ENCODE measurements at regions of chr6 and their contacts with region 1.

Region 1: DNA sequence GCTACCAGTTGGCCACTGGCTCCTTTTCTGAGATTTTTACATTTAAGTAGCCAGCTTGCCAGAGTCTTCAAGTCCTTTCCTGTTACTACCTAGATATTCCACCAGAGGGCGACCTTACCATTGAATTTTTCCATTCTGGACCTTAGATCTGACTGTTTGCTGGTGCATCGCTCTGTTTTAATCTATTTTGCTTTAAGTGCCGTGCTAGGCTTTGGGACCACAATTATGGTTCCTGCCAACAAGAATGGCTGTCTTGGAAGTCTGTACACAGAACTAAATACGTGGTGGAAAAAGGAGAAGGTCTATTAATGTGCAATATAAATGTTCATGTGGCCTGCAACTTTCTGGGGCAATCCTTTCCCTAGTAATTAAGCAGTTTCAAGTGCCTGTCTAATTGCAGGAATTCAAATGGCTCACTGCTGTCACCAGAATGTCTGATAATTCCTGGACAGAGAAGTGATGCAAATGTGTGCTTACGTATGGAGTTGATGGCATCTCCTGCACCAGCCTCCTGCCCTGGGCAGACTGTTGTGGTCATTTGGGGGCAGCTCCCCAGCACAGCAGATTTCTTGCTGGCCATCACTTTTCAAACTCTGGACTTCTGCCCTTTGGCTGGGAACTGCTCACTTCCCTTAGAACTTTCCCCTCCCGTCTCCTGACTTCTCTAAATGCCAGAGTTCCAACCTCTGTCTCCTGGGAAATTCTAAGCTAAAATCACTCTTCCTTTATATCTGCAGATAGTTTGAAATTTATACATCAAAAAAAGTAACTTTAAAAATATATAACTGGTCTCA is 5.6 kb upstream of the HLA-DOA start:
- DNase-seq: peak; percentile 51 to 74
- H3K4me3 ChIP-seq: no peak overlapping the region
- H3K4me3 Mint-ChIP-seq: no peak overlapping the region
- H3K27ac Mint-ChIP-seq: no peak overlapping the region
- H3K4me1 ChIP-seq: 0 out of 2 replicates have a peak, but pooled peaks cover 3% of the 10 kb centered on the region
- H3K4me1 Mint-ChIP-seq: no peaks in the 10 kb centered on the region
- H3K27me3 ChIP-seq: no peaks in the 10 kb centered on the region
- H3K27me3 Mint-ChIP-seq: peaks cover 21% of the 10 kb centered on the region
- CTCF ChIP-seq: peak; percentile 57 to 75

Region 2: DNA sequence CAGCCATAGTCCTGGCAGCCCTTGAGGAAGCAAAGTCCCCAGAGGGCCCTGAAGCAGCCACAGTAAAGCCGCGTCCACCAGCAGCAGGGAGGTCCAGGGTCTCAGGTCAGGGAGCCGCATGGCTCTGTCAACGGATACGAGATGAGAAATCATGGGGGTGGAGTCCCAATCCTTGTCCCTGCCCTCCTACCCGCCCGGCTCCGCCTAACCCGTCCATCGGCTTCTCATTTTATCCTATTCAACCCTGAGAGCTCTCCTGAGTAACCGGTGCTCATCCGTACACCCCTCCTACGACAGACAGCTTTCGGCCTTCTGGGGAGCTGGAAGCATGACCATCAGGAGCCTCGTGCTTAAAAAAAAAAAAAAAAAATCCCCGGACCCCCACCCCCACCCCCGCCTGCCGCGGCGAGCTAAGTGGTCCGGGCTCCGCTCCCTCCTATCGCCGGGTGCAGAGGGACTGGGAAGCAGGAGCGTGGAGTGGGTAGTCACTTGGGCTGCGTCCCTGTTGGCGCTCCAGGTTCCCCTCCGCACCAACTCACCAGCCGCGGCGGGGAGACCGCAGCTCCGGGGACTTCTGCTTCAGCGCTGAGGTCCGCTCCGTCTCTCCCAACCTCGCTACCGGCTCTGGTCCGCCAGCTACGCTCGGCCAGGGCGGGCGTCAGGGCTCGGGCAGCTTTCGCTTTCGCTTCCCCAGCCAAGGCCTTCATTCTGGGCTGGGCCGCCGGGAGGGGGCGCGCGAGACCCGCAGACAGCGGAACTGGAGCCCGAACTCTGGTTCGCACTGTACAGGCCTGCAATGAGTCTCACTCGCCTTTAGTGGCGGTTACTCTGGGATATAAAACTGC is 176.7 kb before region 1 on chr6 and contains the start of gene TAP2:
- CTCF ChIA-PET with region 1: no interaction called
- POLR2A ChIA-PET with region 1: no interaction called
- intact Hi-C with region 1: no loop called
- DNase-seq: peak; percentile 89 to 97
- H3K4me3 ChIP-seq: peak within 1 kb of the TSS; percentile 69
- H3K4me3 Mint-ChIP-seq: peak within 1 kb of the TSS; percentile 72
- H3K27ac Mint-ChIP-seq: no peak within 1 kb of the TSS
- H3K4me1 ChIP-seq: peaks cover 5% of the 10 kb centered on the region
- H3K4me1 Mint-ChIP-seq: peaks cover 8% of the 10 kb centered on the region
- H3K27me3 ChIP-seq: no peaks in the 10 kb centered on the region; the same call in 1 of the 2 replicates
- H3K27me3 Mint-ChIP-seq: no peaks in the 10 kb centered on the region
- CTCF ChIP-seq: peak; percentile 85 to 86
- total RNA-seq, gene TAP2: 10.3 and 11.9 TPM in 2 replicates

Region 3: DNA sequence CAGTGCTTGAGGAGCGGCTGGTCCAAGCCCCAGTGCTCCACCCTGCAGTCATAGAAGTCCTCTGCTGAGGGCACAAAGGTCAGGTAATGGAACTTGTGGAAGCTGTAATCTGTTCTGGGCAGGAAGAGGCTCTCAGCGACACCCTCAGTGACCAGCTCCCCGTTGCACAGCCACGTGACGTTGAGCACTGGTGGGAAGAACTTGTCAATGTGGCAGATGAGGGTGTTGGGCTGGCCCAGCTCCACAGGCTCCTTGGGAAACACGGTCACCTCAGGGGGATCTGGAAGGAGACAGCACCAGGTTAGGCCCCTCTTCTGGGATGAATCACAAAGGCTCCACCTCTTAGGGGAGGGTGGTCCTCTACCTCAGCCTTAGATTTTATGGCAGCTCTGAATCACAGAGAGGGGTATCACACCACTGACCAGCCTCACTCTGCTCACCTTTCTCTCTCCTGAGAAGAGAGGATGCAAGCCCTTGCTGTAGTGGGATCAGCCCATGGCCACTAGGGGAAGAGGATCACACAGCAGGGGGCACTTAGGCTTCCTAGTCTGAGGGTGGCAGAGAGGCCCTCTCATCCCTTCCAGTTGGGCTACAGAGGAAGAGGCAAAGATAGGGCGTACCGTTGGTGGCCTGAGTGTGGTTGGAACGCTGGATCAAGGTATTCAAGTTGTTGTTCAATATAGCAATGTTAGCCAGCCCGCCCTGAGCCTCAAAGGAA is 54.1 kb after region 1 on chr6:
- CTCF ChIA-PET with region 1: no interaction called
- POLR2A ChIA-PET with region 1: no interaction called
- intact Hi-C with region 1: no loop called
- DNase-seq: no peak
- H3K4me3 ChIP-seq: no peak overlapping the region
- H3K4me3 Mint-ChIP-seq: no peak overlapping the region
- H3K27ac Mint-ChIP-seq: no peak overlapping the region
- H3K4me1 ChIP-seq: no peaks in the 10 kb centered on the region
- H3K4me1 Mint-ChIP-seq: no peaks in the 10 kb centered on the region
- H3K27me3 ChIP-seq: no peaks in the 10 kb centered on the region; the same call in 1 of the 2 replicates
- H3K27me3 Mint-ChIP-seq: no peaks in the 10 kb centered on the region
- CTCF ChIP-seq: no peak

Region 4: DNA sequence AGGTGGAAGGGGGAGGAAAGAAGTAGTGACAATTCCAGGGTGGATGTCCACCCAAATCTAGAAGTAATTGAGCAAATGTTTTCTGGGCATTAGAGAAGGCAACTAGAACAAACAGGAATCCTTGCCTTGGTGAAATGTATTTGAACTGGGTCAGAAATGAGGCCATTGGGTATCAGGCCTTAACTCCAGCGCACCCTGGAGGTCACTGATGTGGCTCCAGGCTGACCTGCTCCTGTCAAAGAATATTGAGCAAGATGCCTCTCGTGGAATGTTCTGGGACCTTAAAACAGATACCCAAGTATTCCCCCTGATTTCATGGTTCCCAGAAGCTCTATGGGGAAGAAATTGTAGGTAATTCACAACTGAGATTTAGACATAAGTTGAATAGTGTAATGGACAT is 67.7 kb after region 1 on chr6:
- CTCF ChIA-PET with region 1: no interaction called
- POLR2A ChIA-PET with region 1: no interaction called
- intact Hi-C with region 1: loop called (anchors 1 kb)
- DNase-seq: peak in 1 of 2 experiments; percentile 34
- H3K4me3 ChIP-seq: no peak overlapping the region
- H3K4me3 Mint-ChIP-seq: no peak overlapping the region
- H3K27ac Mint-ChIP-seq: no peak overlapping the region
- H3K4me1 ChIP-seq: no peaks in the 10 kb centered on the region
- H3K4me1 Mint-ChIP-seq: no peaks in the 10 kb centered on the region
- H3K27me3 ChIP-seq: no peaks in the 10 kb centered on the region; the same call in 1 of the 2 replicates
- H3K27me3 Mint-ChIP-seq: peaks cover 20% of the 10 kb centered on the region
- CTCF ChIP-seq: peak; percentile 17 to 53

Region 5: GRCh38 chr6:33147807-33148666 is 133.0 kb after region 1 on chr6:
- CTCF ChIA-PET with region 1: interaction called, 3 read pairs
- POLR2A ChIA-PET with region 1: no interaction called
- intact Hi-C with region 1: loop called (anchors 1 kb)
- DNase-seq: peak in 1 of 2 experiments; percentile 43
- H3K4me3 ChIP-seq: no peak overlapping the region
- H3K4me3 Mint-ChIP-seq: no peak overlapping the region
- H3K27ac Mint-ChIP-seq: no peak overlapping the region
- H3K4me1 ChIP-seq: no peaks in the 10 kb centered on the region
- H3K4me1 Mint-ChIP-seq: no peaks in the 10 kb centered on the region
- H3K27me3 ChIP-seq: no peaks in the 10 kb centered on the region
- H3K27me3 Mint-ChIP-seq: peaks cover 3% of the 10 kb centered on the region
- CTCF ChIP-seq: peak; percentile 75 to 76

Region 6: GRCh38 chr6:33172688-33173534 is 157.9 kb after region 1 on chr6:
- CTCF ChIA-PET with region 1: interaction called, 5 read pairs
- POLR2A ChIA-PET with region 1: no interaction called
- intact Hi-C with region 1: loop called (anchors 1 kb)
- DNase-seq: peak; percentile 27 to 46
- H3K4me3 ChIP-seq: no peak overlapping the region
- H3K4me3 Mint-ChIP-seq: no peak overlapping the region
- H3K27ac Mint-ChIP-seq: peak overlapping the region; percentile 30
- H3K4me1 ChIP-seq: no peaks in the 10 kb centered on the region
- H3K4me1 Mint-ChIP-seq: no peaks in the 10 kb centered on the region
- H3K27me3 ChIP-seq: no peaks in the 10 kb centered on the region
- H3K27me3 Mint-ChIP-seq: peaks cover 19% of the 10 kb centered on the region
- CTCF ChIP-seq: peak; percentile 63 to 76